ENCODE measurements at regions of chr18 and their contacts with region 1.

Region 1: GRCh38 chr18:36067055-36067957 is at the start of gene RPRD1A:
- DNase-seq: peak; percentile 95
- H3K4me3 Mint-ChIP-seq: peak within 1 kb of the TSS; percentile 89
- H3K27ac Mint-ChIP-seq: peak within 1 kb of the TSS; percentile 92
- H3K4me1 Mint-ChIP-seq: peaks cover 22% of the 10 kb centered on the region
- H3K27me3 Mint-ChIP-seq: peaks cover 7% of the 10 kb centered on the region
- total RNA-seq, gene RPRD1A: 23.4 and 24.1 TPM in 2 replicates

Region 2: DNA sequence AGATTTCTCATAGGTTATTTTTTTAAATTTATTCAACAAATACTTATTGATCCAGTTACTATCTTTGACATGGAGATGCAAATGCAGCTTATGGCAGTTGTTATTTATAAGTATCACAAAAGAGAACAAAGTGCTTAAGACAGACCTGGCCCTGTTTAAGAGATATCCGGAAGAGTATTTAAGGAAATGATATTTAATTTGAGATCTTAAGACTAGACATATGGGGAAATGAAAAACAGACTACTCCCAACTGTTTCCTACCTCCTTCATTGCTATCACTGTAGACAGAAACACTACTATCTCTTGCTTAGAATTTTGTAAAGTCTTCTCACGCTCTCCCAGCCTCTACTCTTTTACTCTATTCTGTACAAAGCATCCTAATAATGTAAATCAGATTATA is 35.9 kb before region 1 on chr18:
- intact Hi-C with region 1: loop called (anchors 5 kb)
- DNase-seq: no peak
- H3K4me3 Mint-ChIP-seq: no peak overlapping the region
- H3K27ac Mint-ChIP-seq: no peak overlapping the region
- H3K4me1 Mint-ChIP-seq: peaks cover 21% of the 10 kb centered on the region
- H3K27me3 Mint-ChIP-seq: no peaks in the 10 kb centered on the region

Region 3: GRCh38 chr18:36083729-36084128 is 16.4 kb after region 1 on chr18:
- intact Hi-C with region 1: loop called (anchors 2 kb)
- DNase-seq: no peak
- H3K4me3 Mint-ChIP-seq: no peak overlapping the region
- H3K27ac Mint-ChIP-seq: no peak overlapping the region
- H3K4me1 Mint-ChIP-seq: peaks cover 15% of the 10 kb centered on the region
- H3K27me3 Mint-ChIP-seq: peaks cover 32% of the 10 kb centered on the region

Region 4: DNA sequence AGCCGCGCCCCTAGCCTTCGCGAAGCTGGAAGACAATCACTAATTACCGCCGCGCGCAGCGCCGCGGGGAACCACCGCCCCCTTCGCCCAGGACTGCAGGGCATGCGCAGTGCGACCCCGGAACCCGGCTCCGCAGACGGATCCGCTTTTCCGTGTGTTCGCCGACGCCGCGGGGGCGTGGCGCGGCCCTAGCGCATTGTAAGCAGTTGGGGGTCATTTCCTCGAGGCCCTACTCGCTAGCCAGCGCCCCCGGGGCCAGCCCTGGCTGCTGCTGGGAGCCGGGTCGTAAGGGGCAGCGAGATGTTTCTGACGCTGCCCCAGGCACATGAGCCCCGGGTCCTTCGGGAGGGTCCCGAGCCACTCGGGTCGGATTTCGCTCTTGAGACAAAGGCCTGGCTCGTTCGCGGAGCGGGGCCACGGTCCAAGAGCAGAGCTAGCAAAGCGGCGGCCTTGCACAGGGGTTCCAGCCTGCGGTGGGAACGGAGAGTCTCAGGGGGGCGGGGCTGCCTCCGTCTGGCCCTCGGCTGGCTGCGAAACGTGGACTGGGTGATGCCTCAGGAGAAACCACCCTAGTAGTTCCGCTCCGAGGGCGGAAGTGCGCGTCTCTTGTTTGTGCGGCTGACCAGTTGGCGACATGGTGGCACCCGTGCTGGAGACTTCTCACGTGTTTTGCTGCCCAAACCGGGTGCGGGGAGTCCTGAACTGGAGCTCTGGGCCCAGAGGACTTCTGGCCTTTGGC is 62.2 kb after region 1 on chr18 and contains the starts of genes ELP2 and SLC39A6:
- intact Hi-C with region 1: loop called (anchors 1 kb)
- DNase-seq: peak; percentile 92
- H3K4me3 Mint-ChIP-seq: peak within 1 kb of the TSS; percentile 95
- H3K27ac Mint-ChIP-seq: peak within 1 kb of the TSS; percentile 93
- H3K4me1 Mint-ChIP-seq: peaks cover 47% of the 10 kb centered on the region
- H3K27me3 Mint-ChIP-seq: no peaks in the 10 kb centered on the region
- total RNA-seq, gene ELP2: 93.3 and 94.2 TPM in 2 replicates
- total RNA-seq, gene SLC39A6: 41.7 and 42.7 TPM in 2 replicates